ENCODE measurements at regions of chr1 and their contacts with region 1.

Region 1: DNA sequence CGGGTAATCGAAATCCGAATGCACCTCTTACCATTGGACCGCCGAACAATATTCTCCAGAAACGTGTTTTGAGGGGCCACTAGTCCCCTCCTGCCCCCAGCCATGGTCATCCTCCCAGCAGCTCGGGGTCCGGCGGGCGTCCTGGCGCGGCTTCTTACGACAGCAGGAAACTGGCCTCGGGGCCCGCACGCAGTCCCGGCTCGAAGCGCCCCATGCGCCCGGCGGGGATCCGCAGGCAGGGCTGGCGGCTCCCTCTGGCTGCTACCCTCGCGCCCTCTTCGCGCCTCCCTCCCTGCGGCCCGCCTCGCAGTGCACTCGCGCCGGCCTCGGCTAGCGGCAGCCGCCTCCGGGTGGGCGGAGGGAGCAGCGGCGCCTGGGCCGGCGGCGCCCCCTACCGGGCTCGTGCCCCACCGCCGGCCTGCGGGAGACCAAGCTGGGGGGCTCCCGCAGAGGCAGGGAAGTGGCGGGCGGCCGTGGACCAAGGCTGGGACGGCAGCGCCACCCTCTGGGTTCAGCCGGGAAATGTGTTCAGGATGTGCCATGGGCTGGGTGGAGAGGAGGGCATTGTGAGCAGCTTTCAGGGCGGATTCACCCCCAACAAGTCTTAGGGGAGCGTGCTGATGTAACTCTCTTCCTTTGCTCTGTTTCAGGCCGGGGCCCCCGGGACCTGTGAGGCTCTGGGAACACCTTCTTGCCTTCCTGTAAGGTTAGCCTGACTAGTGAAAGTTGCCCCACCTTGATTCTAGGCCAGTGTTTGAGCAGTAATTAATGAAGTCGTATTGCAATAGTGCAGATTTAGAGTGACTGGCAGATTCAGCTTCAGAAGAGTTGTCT is at the start of gene KCNH1:
- DNase-seq: peak; percentile 84
- ATAC-seq: peak; percentile 99
- total RNA-seq, gene KCNH1: not detected

Region 2: DNA sequence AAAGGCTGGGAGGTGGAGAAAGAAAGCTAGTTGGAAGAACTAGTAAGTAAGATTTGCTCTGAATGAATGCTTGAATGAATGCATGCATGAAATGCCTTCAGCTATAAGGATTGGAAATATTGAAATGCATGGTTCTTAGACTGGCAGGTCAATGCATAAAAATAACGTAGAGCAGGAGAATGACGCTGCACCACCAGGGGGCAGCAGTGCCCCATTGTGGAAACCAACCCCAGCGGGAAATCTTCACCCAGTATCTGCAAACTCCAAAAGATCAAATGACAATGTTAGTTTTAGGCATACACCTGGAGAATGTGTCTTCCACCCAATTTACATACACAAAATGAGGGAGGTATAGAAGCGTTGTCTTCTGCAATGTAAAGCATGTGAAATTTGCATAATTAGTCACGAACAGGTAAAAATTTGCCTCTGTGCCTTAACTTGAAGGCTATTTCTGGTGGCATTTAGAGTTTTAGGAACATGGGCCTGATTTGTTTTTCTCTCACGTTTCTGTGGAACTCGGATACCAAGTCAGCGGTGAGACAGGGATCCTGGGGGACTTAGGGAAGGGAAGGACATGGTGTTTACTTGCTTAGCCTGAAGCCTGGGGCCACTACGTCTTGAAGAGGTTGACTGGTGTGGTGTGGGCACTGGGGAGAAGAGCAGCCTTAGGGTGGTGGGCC is 726.7 kb before region 1 on chr1:
- intact Hi-C with region 1: loop called (anchors 2 kb)
- DNase-seq: peak; percentile 80
- ATAC-seq: peak; percentile 70

Region 3: DNA sequence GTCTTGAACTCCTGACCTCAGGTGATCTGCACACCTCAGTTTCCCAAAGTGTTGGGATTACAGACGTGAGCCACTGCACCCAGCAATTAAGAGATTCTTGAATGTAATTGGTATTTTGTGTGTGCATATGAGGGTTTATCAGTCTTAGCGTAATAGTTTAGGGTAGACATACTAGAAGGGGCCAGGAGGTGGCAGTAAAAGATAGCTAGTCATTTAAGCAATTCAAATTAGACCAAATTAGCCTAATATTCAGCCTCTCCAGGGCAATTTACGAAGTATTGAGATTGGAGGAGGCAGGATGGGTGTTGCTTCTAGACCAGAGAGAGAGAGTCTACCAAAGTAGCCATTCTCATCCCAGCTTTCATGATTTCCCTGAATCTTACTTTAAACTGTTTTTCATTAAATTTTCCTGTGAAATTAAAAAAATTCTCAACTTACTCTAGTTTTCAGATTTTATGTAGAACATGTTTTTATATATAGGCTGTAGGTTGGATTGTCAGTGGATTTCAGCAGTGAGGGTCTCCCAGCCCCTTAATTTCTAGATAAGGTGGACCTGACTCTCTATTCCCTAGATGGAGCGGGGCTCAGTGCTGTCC is 685.7 kb before region 1 on chr1:
- intact Hi-C with region 1: loop called (anchors 5 kb)
- DNase-seq: no peak
- ATAC-seq: peak; percentile 38

Region 4: GRCh38 chr1:210584439-210585113 is 549.5 kb before region 1 on chr1:
- intact Hi-C with region 1: loop called (anchors 5 kb)
- DNase-seq: peak; percentile 82
- ATAC-seq: peak; percentile 85

Region 5: GRCh38 chr1:211267204-211267857 is 133.3 kb after region 1 on chr1:
- intact Hi-C with region 1: no loop called
- DNase-seq: no peak
- ATAC-seq: no peak